ENCODE measurements at regions of chr16 and their contacts with region 1.

Region 1: GRCh38 chr16:54286090-54286993 is at the start of gene IRX3:
- DNase-seq: peak; percentile 38
- ATAC-seq: peak; percentile 27
- H3K4me3 Mint-ChIP-seq: peak within 1 kb of the TSS; percentile 62
- H3K27ac Mint-ChIP-seq: no peak within 1 kb of the TSS
- H3K4me1 Mint-ChIP-seq: peaks cover 35% of the 10 kb centered on the region
- H3K27me3 Mint-ChIP-seq: peaks cover 54% of the 10 kb centered on the region
- total RNA-seq, gene IRX3: not detected

Region 2: DNA sequence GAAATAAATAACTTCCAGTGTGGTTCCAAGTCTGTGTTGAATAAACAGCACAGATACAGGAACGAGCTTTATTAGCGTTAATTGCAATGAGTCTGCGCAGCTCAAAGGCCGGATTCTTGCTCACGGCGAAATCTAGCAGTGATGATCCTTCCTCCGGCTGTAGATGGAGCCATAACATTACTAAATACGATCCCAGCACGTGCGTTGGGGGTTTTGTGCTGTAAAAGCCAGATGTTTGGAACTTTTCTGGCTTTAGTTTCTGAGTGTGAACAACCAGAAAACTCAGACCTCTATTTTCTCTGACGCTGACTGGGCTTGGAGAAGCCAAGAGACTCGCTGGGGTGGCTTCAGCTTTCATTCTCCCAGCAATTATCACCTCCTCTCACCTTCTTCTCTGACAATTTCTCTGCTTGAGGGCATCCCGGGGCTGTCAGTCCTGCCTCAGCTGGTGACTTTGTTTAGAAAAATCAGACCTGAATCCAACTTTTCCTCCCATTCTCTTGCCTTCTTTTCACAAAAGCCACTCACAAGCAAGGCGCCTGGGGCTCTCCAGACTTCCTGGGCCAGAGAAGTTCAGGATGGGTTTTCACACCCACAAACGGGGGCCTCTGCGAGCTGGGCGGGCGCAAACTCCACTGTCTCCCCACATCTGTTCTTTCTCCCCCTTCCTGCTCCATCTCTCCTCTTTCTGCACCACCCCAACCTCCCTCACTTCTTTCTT is 736.2 kb before region 1 on chr16:
- CTCF ChIA-PET with region 1: interaction called, 4 read pairs
- POLR2A ChIA-PET with region 1: no interaction called
- intact Hi-C with region 1: loop called in 1 of 2 experiments (anchors 10 kb)
- DNase-seq: peak; percentile 69
- ATAC-seq: peak; percentile 82
- H3K4me3 Mint-ChIP-seq: no peak overlapping the region
- H3K27ac Mint-ChIP-seq: no peak overlapping the region
- H3K4me1 Mint-ChIP-seq: peaks cover 29% of the 10 kb centered on the region
- H3K27me3 Mint-ChIP-seq: peaks cover 19% of the 10 kb centered on the region

Region 3: DNA sequence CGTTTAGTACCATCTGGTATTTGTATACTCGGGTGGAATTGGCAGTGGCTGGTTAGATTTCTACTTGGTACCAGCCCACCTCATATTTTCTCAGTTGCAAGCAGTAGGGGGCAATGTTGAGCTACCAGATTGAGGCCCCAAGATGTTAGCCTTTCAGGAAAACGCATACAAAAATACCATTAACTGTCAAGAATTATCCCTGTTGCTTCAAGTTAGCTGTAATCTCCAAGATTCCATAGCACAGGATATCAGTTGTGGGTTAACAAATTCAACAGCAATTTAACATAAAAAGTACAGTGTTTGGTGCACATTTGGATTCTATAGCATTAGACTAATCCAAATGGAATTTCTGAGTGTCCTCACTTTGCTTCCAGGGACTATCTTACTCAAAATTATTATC is 394.2 kb before region 1 on chr16:
- CTCF ChIA-PET with region 1: no interaction called
- POLR2A ChIA-PET with region 1: no interaction called
- intact Hi-C with region 1: loop called in 1 of 2 experiments (anchors 5 kb)
- DNase-seq: peak; percentile 69
- ATAC-seq: peak; percentile 71
- H3K4me3 Mint-ChIP-seq: no peak overlapping the region
- H3K27ac Mint-ChIP-seq: no peak overlapping the region
- H3K4me1 Mint-ChIP-seq: peaks cover 5% of the 10 kb centered on the region
- H3K27me3 Mint-ChIP-seq: no peaks in the 10 kb centered on the region

Region 4: DNA sequence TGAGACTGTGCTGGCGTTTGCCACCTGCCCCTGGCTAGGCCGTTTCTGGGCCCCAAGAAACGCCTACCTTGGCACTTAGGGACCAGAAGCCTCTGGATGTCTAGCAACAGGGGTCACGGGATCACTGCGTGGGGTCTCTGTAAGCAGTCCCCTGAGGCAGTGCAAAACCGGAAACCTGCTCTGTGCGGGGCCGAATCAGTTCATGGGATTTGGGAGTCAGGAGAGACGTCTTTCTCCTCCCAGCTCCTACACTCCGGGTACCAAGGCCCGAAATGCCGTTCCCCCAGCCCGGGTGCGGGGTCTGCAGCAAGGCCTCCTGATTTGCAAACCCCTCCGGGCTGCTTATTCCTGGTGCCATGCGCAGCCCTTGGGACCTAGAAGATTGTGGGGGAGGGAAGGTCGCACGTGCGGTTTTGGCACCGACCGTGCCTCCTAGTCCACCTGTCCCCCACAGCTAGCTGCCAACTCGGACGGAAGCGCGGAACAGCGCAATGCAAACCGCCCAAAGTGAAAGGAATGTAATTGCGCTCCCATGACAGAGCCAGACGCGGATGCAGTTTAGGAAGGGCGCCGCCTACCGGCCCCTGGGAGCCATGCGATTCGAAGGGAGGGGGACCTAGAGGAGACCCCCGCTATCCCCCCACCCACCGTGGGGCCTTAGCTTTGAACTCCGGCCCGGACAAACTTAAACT is 650.8 kb after region 1 on chr16:
- CTCF ChIA-PET with region 1: no interaction called
- POLR2A ChIA-PET with region 1: no interaction called
- intact Hi-C with region 1: loop called (anchors 2 kb)
- DNase-seq: peak; percentile 63
- ATAC-seq: peak; percentile 57
- H3K4me3 Mint-ChIP-seq: peak overlapping the region; percentile 43
- H3K27ac Mint-ChIP-seq: no peak overlapping the region
- H3K4me1 Mint-ChIP-seq: peaks cover 16% of the 10 kb centered on the region
- H3K27me3 Mint-ChIP-seq: peaks cover 81% of the 10 kb centered on the region

Region 5: GRCh38 chr16:55333684-55334083 is 1047.3 kb after region 1 on chr16:
- CTCF ChIA-PET with region 1: no interaction called
- POLR2A ChIA-PET with region 1: no interaction called
- intact Hi-C with region 1: loop called in 1 of 2 experiments (anchors 5 kb)
- DNase-seq: no peak
- ATAC-seq: no peak
- H3K4me3 Mint-ChIP-seq: no peak overlapping the region
- H3K27ac Mint-ChIP-seq: no peak overlapping the region
- H3K4me1 Mint-ChIP-seq: no peaks in the 10 kb centered on the region
- H3K27me3 Mint-ChIP-seq: peaks cover 45% of the 10 kb centered on the region